ENCODE measurements at regions of chr2 and their contacts with region 1.

Region 1: GRCh38 chr2:65710779-65711295 is 278.4 kb upstream of the SPRED2 start:
- DNase-seq: no peak
- ATAC-seq: peak; percentile 87
- H3K4me3 Mint-ChIP-seq: no peak overlapping the region
- H3K27ac Mint-ChIP-seq: no peak overlapping the region
- H3K4me1 Mint-ChIP-seq: 0 out of 2 replicates have a peak, but pooled peaks cover 4% of the 10 kb centered on the region
- H3K27me3 Mint-ChIP-seq: no peaks in the 10 kb centered on the region; the same call in 1 of the 2 replicates
- CTCF ChIP-seq: peak; percentile 15; the same call in 1 of the 2 replicates

Region 2: GRCh38 chr2:65638443-65638842 is 72.4 kb before region 1 on chr2:
- CTCF ChIA-PET with region 1: interaction called, 38 read pairs
- POLR2A ChIA-PET with region 1: no interaction called
- DNase-seq: no peak
- ATAC-seq: peak; percentile 77
- H3K4me3 Mint-ChIP-seq: no peak overlapping the region
- H3K27ac Mint-ChIP-seq: no peak overlapping the region
- H3K4me1 Mint-ChIP-seq: 0 out of 2 replicates have a peak, but pooled peaks cover 3% of the 10 kb centered on the region
- H3K27me3 Mint-ChIP-seq: no peaks in the 10 kb centered on the region
- CTCF ChIP-seq: no peak

Region 3: DNA sequence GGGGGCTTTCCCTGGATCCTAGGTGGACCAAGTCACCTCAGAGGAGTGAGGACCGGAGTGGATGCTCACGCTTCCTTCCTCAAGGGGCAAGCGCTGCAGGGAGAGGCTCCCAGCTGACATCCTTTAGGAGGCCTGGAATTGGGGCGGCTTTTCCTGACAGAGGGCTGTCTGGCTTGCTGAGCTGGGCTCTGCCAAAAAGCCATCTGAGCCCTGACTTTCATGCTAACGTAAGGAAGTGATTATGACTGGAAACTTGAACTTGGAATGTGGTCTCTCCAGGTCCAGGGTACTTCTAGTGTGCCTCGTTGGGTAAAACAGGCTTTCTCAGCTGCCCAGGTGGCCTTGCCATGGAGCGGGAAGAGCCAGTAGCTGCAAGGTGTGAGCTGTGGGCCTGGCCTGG is 10.1 kb before region 1 on chr2:
- CTCF ChIA-PET with region 1: interaction called, 11 read pairs
- POLR2A ChIA-PET with region 1: no interaction called
- DNase-seq: no peak
- ATAC-seq: no peak
- H3K4me3 Mint-ChIP-seq: no peak overlapping the region
- H3K27ac Mint-ChIP-seq: no peak overlapping the region
- H3K4me1 Mint-ChIP-seq: peaks cover 3% of the 10 kb centered on the region; the same call in 1 of the 2 replicates
- H3K27me3 Mint-ChIP-seq: no peaks in the 10 kb centered on the region; the same call in 1 of the 2 replicates
- CTCF ChIP-seq: no peak

Region 4: DNA sequence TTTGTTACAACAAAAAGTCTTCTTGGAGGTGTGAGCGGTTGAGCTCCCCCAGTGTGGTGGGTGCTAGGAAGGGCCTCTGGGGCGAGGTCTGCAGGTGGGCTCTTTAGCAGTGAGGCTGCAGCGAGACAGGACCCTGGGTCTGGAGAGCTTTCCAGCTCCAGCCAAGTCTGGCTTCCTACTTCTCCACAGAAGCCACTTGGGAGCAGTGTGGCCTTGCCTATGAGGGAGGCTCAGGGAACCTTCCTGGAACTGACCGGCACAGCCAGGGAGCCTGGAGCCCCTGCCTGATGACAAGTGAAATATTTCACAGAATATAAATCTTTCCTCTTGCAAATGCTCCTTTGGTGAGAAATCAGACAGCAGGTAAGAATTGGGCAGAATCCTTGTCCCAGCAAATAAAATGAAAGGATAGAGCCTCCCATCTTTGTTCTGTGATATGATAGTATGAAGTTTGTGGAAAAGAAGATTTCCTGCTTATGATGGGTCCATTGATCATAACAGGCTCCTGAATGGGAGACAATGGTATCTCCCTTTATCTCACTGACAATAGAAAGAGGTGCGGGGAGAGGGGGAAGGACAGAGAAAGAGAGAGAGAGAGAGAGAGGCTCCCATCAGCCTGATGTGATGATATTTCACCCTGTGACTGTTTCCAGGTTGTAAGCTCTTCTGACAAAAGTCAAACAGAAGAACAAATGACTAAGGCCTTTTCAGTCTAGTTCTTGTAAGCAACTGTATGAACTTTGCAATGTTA is 11.4 kb after region 1 on chr2:
- CTCF ChIA-PET with region 1: interaction called, 12 read pairs
- POLR2A ChIA-PET with region 1: no interaction called
- DNase-seq: peak; percentile 61
- ATAC-seq: peak; percentile 98
- H3K4me3 Mint-ChIP-seq: no peak overlapping the region
- H3K27ac Mint-ChIP-seq: no peak overlapping the region
- H3K4me1 Mint-ChIP-seq: peaks cover 9% of the 10 kb centered on the region
- H3K27me3 Mint-ChIP-seq: no peaks in the 10 kb centered on the region
- CTCF ChIP-seq: no peak